Activated CD8-positive, alpha-beta T cell treated with anti-CD3 and anti-CD28 coated beads for 36 hours (primary cell): ENCODE measurements at regions of chr4 and their contacts with region 1.

Region 1: GRCh38 chr4:181528570-181529184 is 714.5 kb upstream of the TENM3 start:
- DNase-seq: peak; percentile 38
- ATAC-seq: no peak
- H3K4me3 Mint-ChIP-seq: no peak overlapping the region
- H3K27ac Mint-ChIP-seq: no peak overlapping the region
- H3K4me1 Mint-ChIP-seq: no peaks in the 10 kb centered on the region
- H3K27me3 Mint-ChIP-seq: no peaks in the 10 kb centered on the region
- CTCF ChIP-seq: peak; percentile 78

Region 2: DNA sequence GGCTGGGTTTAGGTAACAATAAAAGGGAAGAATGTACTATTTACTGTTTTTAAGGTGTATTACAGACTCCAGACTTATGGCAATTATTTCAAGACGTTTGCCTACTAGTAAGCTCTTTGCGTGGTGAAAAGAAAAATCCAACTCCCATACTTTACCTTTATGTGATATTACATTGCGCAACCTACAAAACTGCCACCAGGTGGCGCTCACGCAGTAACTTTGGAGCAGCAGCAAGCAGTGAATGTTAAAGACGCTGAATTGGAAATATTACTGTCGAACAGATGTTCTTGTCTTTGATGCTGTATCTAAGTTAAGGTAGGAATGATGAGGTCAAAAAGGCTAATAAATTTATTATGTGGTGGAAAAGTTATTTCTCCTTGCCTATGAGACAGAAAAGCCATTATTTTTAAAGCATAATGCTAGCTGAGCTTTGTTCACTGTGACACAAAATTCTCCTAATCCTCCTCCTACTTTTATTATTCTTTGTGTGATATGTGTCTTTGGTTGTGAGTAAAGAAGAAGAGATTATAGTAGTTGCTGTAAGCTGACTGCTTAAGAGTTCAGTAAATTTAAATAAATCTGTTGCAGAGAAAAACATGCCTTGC is 385.3 kb before region 1 on chr4:
- CTCF ChIA-PET with region 1: interaction called, 16 read pairs
- POLR2A ChIA-PET with region 1: no interaction called
- intact Hi-C with region 1: loop called (anchors 2 kb)
- DNase-seq: peak; percentile 84
- ATAC-seq: peak; percentile 68
- H3K4me3 Mint-ChIP-seq: no peak overlapping the region
- H3K27ac Mint-ChIP-seq: no peak overlapping the region
- H3K4me1 Mint-ChIP-seq: no peaks in the 10 kb centered on the region
- H3K27me3 Mint-ChIP-seq: no peaks in the 10 kb centered on the region
- CTCF ChIP-seq: peak; percentile 89

Region 3: DNA sequence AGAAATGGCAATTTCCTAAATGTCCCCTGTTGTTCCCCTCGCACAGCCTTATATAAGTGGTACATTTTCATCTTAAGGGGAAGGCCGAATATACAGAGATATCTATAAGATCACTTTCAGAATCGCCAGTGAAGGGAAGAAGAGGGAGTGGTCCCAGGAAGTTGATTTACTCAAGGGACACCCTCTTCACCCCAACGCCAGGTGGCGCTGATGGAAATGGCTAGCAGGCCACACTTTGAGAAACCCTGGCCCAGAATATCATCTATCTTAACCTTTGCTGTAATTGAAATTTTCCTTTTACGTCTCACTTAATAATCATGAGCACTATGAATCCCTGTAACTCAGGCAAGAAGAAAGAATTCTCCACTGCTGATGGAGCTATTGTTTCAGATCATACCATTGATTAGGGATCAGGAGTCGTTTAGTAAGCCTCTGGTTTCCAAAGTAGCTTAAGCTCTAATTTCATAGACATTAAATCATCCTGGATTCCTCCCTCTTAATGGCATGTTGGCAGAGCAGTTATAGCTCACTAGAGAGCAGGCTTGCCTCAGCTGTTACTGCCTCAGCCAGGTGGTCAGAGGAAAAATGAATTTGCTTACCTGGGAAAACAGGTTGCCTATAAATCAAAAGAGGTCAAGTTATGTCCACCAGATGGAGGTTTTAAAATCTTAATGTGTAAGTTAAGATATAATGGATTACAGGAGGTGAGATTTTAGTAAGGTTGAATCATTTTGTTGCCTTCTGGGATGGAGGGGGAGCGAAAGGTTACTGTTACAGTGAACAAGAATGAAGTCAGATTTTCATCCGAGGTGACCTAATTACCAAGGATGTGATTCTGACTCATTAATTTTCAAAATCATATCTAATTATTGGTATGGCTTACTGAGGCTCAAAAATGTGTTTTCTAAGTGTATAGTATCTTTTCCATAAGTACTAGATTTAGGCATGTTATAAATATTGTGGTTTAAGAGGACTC is 226.7 kb before region 1 on chr4:
- CTCF ChIA-PET with region 1: interaction called, 12 read pairs
- POLR2A ChIA-PET with region 1: no interaction called
- intact Hi-C with region 1: loop called (anchors 5 kb)
- DNase-seq: peak; percentile 45
- ATAC-seq: no peak
- H3K4me3 Mint-ChIP-seq: no peak overlapping the region
- H3K27ac Mint-ChIP-seq: no peak overlapping the region
- H3K4me1 Mint-ChIP-seq: no peaks in the 10 kb centered on the region
- H3K27me3 Mint-ChIP-seq: no peaks in the 10 kb centered on the region
- CTCF ChIP-seq: peak; percentile 30

Region 4: GRCh38 chr4:182212211-182212761 is 683.6 kb after region 1 on chr4:
- CTCF ChIA-PET with region 1: no interaction called
- POLR2A ChIA-PET with region 1: no interaction called
- intact Hi-C with region 1: no loop called
- DNase-seq: no peak
- ATAC-seq: no peak
- H3K4me3 Mint-ChIP-seq: no peak overlapping the region
- H3K27ac Mint-ChIP-seq: no peak overlapping the region
- H3K4me1 Mint-ChIP-seq: no peaks in the 10 kb centered on the region
- H3K27me3 Mint-ChIP-seq: no peaks in the 10 kb centered on the region
- CTCF ChIP-seq: no peak